Activated CD8-positive, alpha-beta memory T cell treated with anti-CD3 and anti-CD28 coated beads, Interleukin-2, amount 10 ng/mL, durations not matched to agents 7 days and 5 days (primary cell): ENCODE measurements at regions of chr10 and their contacts with region 1.

Region 1: DNA sequence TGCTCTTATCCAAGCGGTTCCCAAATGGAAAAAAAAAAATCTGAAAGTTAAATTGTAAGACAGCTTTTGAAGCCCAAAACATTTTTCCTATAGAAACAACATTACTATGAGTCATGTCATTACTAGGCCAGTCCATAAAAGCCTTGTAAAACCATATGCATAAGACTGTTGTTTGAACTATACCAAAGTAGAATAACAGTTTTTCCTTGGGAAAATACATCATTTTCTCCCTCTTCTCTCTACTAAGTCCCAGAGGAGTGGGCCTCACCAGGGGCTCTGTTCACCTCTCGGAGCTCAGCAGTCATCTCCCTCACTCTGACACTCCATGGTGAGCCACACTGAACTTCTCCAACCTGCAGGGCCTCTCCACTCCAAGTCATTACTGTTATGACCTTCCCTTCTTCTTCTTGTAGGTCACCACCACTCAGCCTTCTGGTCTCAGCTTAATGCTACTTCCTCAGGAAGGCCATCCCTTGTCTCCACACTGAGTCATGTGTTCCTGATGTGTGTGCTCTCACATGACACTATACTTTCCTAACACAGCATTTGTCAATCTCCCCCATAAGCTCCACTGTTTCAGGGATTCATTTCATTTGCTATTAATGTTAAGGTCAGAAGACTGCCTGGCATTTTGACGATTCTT is 32.5 kb downstream of the ZNF438 start:
- DNase-seq: no peak
- ATAC-seq: peak; percentile 43
- H3K4me3 Mint-ChIP-seq: peak overlapping the region; percentile 62
- H3K27ac Mint-ChIP-seq: peak overlapping the region; percentile 91
- H3K4me1 Mint-ChIP-seq: peaks cover 43% of the 10 kb centered on the region
- H3K27me3 Mint-ChIP-seq: no peaks in the 10 kb centered on the region

Region 2: GRCh38 chr10:30873411-30873810 is 125.8 kb before region 1 on chr10:
- CTCF ChIA-PET with region 1: no interaction called
- DNase-seq: no peak
- ATAC-seq: no peak
- H3K4me3 Mint-ChIP-seq: no peak overlapping the region
- H3K27ac Mint-ChIP-seq: no peak overlapping the region
- H3K4me1 Mint-ChIP-seq: no peaks in the 10 kb centered on the region
- H3K27me3 Mint-ChIP-seq: no peaks in the 10 kb centered on the region

Region 3: GRCh38 chr10:30986053-30986555 is 13.1 kb before region 1 on chr10:
- CTCF ChIA-PET with region 1: no interaction called
- DNase-seq: no peak
- ATAC-seq: peak; percentile 88
- H3K4me3 Mint-ChIP-seq: no peak overlapping the region
- H3K27ac Mint-ChIP-seq: peak overlapping the region; percentile 71
- H3K4me1 Mint-ChIP-seq: peaks cover 23% of the 10 kb centered on the region
- H3K27me3 Mint-ChIP-seq: no peaks in the 10 kb centered on the region

Region 4: DNA sequence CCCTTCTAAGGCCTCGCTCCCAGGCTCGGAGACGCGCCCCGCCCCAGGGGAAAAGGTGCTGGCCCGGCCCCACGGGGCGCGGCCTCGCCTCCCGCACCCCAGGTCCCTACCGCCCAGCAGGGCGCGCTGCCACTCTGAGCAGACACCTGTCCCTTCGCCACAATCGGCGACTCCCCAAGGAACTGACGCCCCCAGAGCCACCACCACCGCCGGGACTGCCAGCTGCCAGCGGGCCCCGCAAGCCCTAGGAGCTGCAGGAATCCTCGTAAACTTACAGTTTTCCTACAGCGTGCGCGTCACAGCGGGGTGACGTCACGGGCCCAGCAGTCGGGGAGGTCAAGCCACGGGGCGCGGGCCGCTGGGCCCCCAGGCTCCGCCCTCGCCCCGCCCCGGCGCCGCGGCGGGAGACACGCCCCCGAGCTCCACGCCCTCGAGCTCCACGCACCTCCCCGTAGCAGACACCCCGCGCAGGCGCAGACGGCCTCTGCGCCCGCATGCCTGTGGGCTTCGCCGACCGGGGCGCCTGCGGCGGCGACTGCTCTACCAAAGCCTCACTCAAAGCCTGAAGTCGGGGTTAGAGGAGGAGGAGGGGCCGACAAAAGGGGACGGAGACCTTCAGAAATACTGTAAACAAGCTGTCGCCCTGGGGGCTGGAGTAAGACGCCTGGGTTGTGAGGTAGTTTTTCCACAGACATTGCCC is 32.5 kb after region 1 on chr10 and contains the start of gene ZNF438:
- CTCF ChIA-PET with region 1: interaction called, 16 read pairs
- DNase-seq: peak; percentile 95
- ATAC-seq: peak; percentile 89
- H3K4me3 Mint-ChIP-seq: peak within 1 kb of the TSS; percentile 81
- H3K27ac Mint-ChIP-seq: peak within 1 kb of the TSS; percentile 97
- H3K4me1 Mint-ChIP-seq: peaks cover 17% of the 10 kb centered on the region
- H3K27me3 Mint-ChIP-seq: no peaks in the 10 kb centered on the region
- total RNA-seq, gene ZNF438: 3.8 to 4.4 TPM

Region 5: DNA sequence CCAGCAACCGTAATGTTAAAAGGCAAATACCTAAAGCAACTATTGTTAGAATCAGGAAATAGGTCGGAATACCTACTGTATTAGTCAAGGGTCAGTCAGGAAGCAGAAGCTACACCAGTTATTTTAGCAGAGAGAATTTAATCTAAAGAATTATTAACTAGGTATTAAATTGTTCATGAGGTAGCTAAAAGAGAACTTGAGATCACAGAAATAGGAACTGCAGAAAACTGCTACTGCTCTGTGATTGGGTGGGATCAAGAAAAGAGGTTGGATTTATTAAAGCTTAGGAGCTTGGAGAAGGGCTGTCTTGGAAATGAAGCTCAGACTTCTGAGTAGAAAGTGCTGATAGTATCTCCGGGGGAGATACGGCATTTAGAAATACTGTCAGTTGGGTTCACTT is 52.5 kb after region 1 on chr10:
- CTCF ChIA-PET with region 1: no interaction called
- DNase-seq: no peak
- ATAC-seq: no peak
- H3K4me3 Mint-ChIP-seq: no peak overlapping the region
- H3K27ac Mint-ChIP-seq: no peak overlapping the region
- H3K4me1 Mint-ChIP-seq: no peaks in the 10 kb centered on the region
- H3K27me3 Mint-ChIP-seq: peaks cover 7% of the 10 kb centered on the region

Region 6: DNA sequence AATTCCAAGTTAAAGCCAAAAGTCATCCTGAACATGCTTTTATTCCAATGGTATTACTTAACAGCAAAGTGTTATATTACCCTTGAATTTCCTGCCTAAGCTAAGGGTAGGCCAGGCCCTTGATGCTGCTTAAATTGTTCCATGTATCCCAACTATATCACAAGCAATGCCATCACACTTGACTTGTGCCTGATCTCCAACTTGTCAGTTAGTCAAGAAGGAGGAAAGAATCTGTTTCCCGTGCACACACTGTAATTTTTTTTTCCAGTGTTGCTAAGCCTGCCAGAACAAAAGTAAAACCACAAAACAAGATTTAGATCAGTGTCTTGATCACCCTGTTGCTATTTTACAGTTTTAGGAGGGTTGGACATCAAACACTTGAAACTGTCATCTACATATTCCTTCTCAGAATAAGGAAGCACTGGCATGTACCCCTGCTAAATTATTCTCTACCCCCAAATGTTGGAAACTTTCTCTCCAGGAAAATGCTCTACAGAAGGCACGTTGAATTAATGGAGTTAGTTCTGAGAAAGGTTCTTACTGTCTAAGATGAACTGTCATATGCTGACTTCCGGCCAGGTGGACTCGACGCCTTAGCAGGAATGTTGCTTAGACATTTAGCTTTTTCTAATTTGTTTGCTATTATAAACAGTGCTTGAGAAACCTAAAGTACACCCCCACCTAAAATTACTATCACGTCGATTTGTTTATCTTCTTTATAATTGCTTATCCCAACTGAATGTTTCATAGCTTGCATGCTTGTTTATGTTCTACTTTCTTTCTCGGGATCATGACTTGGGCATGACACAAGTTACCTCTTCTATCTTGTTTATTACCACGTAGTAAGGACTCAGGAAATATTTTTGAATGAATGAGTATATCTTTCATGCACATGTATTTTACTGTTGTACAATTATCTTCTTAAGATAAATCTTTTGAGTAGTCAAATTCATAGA is 138.0 kb after region 1 on chr10:
- CTCF ChIA-PET with region 1: no interaction called
- DNase-seq: no peak
- ATAC-seq: peak; percentile 37
- H3K4me3 Mint-ChIP-seq: no peak overlapping the region
- H3K27ac Mint-ChIP-seq: peak overlapping the region; percentile 70
- H3K4me1 Mint-ChIP-seq: peaks cover 39% of the 10 kb centered on the region
- H3K27me3 Mint-ChIP-seq: no peaks in the 10 kb centered on the region